ENCODE measurements at regions of chr12 and their contacts with region 1.

Region 1: DNA sequence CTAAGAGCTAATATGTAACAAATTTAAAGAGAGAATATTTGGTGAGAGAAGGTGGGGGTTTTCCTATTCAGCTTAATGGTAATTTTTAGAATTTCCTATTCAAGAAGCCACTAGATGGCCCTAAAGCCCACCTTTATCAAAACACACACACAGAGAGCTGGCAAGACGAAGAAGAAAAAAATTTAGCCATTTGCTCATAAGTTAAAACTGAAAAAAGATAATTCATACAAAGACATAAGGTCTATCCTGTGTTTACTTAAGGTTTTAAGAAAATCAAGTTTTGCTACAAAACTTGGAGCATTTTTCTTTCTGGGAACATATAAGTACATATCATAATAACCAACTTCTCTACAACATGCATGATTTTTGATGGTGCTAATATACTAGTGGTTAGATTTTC is 46.8 kb upstream of the PCED1B start:
- DNase-seq: peak in 1 of 2 experiments; percentile 52
- H3K4me3 ChIP-seq: no peak overlapping the region
- H3K4me3 Mint-ChIP-seq: no peak overlapping the region
- H3K27ac Mint-ChIP-seq: no peak overlapping the region
- H3K4me1 ChIP-seq: peaks cover 15% of the 10 kb centered on the region
- H3K4me1 Mint-ChIP-seq: peaks cover 47% of the 10 kb centered on the region
- H3K27me3 ChIP-seq: no peaks in the 10 kb centered on the region
- H3K27me3 Mint-ChIP-seq: no peaks in the 10 kb centered on the region
- CTCF ChIP-seq: peak; percentile 48 to 61

Region 2: DNA sequence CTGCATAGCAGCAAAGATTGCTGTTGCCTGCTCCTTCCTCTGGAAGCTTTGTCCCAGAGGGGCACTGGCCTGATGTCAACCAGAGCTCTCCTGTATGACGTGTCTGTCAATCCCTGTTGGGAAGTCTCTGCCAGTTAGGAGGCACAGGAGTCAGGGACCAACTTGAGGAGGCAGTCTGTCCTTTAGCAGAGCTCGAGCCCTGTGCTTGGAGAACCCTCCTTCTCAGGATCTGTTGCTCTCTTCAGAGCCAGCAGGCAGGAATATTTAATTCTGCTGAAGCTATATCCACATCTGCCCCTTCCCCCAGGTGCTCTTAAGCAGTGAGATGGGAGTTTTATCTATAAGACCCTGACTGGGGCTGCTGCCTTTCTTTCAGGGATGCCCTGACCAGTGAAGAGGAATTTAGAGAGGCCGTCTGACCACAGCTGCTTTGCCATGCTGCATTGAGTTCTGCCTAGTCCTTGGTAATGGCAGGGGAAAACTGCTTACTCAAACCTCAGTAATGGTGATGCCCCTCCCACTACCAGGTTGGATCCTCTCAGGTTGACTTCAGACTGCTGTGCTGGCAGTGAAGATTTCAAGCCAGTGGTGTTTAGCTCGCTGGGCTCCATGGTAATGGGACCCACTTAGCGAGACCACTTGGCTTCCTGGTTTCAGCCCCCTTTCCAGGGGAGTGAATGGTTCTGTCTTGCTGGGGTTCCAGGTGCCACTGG is 441.5 kb before region 1 on chr12:
- CTCF ChIA-PET with region 1: no interaction called
- POLR2A ChIA-PET with region 1: no interaction called
- intact Hi-C with region 1: no loop called
- DNase-seq: no peak
- H3K4me3 ChIP-seq: no peak overlapping the region
- H3K4me3 Mint-ChIP-seq: no peak overlapping the region
- H3K27ac Mint-ChIP-seq: no peak overlapping the region
- H3K4me1 ChIP-seq: peaks cover 2% of the 10 kb centered on the region
- H3K4me1 Mint-ChIP-seq: peaks cover 14% of the 10 kb centered on the region
- H3K27me3 ChIP-seq: no peaks in the 10 kb centered on the region
- H3K27me3 Mint-ChIP-seq: no peaks in the 10 kb centered on the region
- CTCF ChIP-seq: no peak

Region 3: DNA sequence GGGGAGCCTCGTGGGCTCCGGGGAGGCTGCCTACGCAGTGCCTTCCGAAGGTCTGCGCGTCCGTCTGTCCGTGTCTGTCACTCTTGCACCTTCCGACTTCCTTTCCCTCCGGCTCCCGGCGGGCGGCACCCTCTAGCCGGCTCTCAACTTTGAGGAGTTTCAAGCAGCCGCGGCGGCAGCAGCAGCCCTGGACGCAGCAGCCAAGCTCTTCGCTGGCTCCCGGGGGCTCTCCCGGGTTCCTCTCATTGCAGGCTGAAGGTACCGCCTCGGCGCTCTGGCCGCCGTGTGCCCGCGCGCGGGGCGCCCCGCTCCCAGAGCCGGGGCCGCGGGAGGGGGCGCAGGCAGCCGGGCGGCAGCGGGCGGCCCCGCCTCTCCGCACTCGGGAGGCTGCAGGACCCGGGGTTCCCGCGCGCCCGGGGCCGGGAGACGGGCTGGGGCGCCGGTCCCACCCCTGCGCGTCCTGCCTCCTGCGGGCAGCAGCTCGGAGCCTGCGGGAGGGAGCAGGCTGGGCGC is 46.9 kb after region 1 on chr12 and contains the starts of genes AMIGO2 and PCED1B:
- CTCF ChIA-PET with region 1: interaction called, 16 read pairs
- POLR2A ChIA-PET with region 1: no interaction called
- intact Hi-C with region 1: loop called (anchors 2 kb)
- DNase-seq: peak; percentile 78 to 85
- H3K4me3 ChIP-seq: peak within 1 kb of the TSS; percentile 72
- H3K4me3 Mint-ChIP-seq: peak within 1 kb of the TSS; percentile 82
- H3K27ac Mint-ChIP-seq: peak within 1 kb of the TSS; percentile 27
- H3K4me1 ChIP-seq: peaks cover 8% of the 10 kb centered on the region; the same call in 1 of the 2 replicates
- H3K4me1 Mint-ChIP-seq: peaks cover 35% of the 10 kb centered on the region
- H3K27me3 ChIP-seq: peaks cover 1% of the 10 kb centered on the region; the same call in 1 of the 2 replicates
- H3K27me3 Mint-ChIP-seq: peaks cover 7% of the 10 kb centered on the region
- CTCF ChIP-seq: peak in 1 of 2 experiments; percentile 66
- total RNA-seq, gene AMIGO2: 1.6 and 1.9 TPM in 2 replicates
- total RNA-seq, gene PCED1B: 7.0 and 7.8 TPM in 2 replicates

Region 4: DNA sequence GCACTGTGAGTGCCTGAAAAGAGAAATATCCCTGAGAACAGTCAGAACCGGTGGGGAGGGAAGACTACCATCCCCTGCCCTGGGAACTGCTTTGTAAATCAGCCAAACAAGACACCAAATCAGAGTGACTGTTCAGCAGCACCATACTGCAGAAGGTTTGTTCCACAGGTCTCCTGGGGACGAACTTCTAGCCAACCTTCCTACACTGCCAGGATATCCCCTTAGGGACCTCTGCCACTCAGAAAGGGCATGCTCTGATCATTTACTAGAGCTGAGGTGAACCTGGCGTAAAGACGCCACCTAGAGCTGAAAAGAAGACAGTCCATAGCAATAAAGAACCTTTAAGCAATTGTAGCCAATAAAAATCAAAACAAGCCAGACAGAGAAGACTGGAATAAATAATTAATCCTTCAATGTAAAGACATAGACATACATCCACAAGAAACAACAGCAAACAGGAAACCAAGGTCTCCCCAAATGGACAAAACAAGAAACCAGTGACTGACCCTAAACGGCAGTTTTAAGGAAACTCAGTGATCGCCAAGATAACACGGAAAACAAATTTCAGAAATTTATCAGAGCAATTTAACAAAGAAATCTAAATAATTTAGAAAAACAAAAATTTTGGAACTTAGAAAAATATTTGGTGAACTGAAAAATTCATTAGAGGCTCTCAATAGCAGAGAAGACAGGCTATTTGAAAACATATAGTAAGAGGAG is 275.2 kb after region 1 on chr12:
- CTCF ChIA-PET with region 1: interaction called, 26 read pairs
- POLR2A ChIA-PET with region 1: no interaction called
- intact Hi-C with region 1: loop called (anchors 1 kb)
- DNase-seq: peak; percentile 67 to 71
- H3K4me3 ChIP-seq: no peak overlapping the region
- H3K4me3 Mint-ChIP-seq: no peak overlapping the region
- H3K27ac Mint-ChIP-seq: no peak overlapping the region
- H3K4me1 ChIP-seq: peaks cover 7% of the 10 kb centered on the region
- H3K4me1 Mint-ChIP-seq: peaks cover 23% of the 10 kb centered on the region
- H3K27me3 ChIP-seq: no peaks in the 10 kb centered on the region
- H3K27me3 Mint-ChIP-seq: no peaks in the 10 kb centered on the region
- CTCF ChIP-seq: peak; percentile 71 to 81

Region 5: GRCh38 chr12:47408171-47408871 is 375.7 kb after region 1 on chr12:
- CTCF ChIA-PET with region 1: interaction called, 10 read pairs
- POLR2A ChIA-PET with region 1: no interaction called
- intact Hi-C with region 1: loop called (anchors 1 kb)
- DNase-seq: peak; percentile 27 to 53
- H3K4me3 ChIP-seq: no peak overlapping the region
- H3K4me3 Mint-ChIP-seq: no peak overlapping the region
- H3K27ac Mint-ChIP-seq: no peak overlapping the region
- H3K4me1 ChIP-seq: 0 out of 2 replicates have a peak, but pooled peaks cover 3% of the 10 kb centered on the region
- H3K4me1 Mint-ChIP-seq: no peaks in the 10 kb centered on the region
- H3K27me3 ChIP-seq: no peaks in the 10 kb centered on the region
- H3K27me3 Mint-ChIP-seq: no peaks in the 10 kb centered on the region
- CTCF ChIP-seq: peak; percentile 48 to 54

Region 6: DNA sequence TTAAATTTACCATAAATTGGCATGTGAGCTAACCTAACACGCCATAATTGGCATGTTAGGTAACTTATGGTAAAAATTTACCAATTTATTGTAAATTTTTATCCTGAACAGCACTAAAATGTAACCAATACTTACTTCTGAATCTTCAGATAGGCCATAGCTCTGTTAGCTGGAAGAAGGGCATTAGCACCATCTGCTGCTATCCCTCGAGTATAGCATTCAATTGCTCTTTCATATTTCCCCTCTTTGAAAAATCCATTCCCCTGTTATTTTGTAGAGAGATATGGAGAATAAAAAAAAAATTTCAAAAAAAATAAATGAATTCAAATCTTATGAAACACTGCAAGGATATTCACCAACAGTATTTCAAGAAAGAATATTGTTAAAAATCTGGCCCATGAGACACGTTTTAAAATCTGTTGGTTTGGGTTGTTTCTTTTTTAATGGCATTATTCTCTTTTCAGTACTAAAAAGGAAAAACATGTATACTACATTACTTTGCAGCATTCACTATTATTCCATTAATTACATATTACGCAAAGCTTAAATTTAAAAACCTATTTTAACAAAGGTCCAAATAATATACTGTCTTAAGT is 654.1 kb after region 1 on chr12:
- CTCF ChIA-PET with region 1: interaction called, 5 read pairs
- POLR2A ChIA-PET with region 1: no interaction called
- intact Hi-C with region 1: loop called (anchors 1 kb)
- DNase-seq: peak in 1 of 2 experiments; percentile 49
- H3K4me3 ChIP-seq: no peak overlapping the region
- H3K4me3 Mint-ChIP-seq: no peak overlapping the region
- H3K27ac Mint-ChIP-seq: no peak overlapping the region
- H3K4me1 ChIP-seq: no peaks in the 10 kb centered on the region; the same call in 1 of the 2 replicates
- H3K4me1 Mint-ChIP-seq: no peaks in the 10 kb centered on the region
- H3K27me3 ChIP-seq: no peaks in the 10 kb centered on the region
- H3K27me3 Mint-ChIP-seq: no peaks in the 10 kb centered on the region
- CTCF ChIP-seq: peak; percentile 56 to 86